ENCODE measurements at regions of chr7 and their contacts with region 1.

Region 1: DNA sequence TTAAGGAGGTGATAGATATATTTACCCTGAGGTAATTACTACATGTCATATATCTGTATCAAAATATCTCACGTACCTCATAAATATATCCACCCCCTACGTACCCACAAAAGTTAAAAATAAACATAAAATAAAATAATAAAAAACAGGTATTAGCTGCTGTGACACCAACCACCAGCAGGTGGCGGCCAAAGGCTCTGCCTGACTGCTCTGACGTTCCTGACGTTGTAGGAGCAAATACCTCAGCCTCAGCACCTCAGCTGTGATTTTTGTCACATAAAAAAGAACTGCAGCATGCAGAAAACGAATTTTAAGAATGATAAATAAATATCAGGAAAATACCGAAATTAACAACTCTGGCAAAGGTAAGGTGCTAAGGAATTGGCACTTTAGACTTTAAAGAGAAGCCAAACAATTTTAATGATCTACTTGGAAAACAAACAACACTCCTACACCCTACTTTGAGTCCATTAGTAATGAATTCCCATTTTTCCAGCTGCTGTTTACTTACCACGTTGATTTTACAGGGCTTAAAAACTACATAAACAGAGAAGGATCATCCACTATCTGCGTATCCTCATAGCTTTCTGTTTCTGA is 125.4 kb upstream of the TARP start:
- DNase-seq: peak in 1 of 2 experiments; percentile 43
- H3K4me3 ChIP-seq: no peak overlapping the region
- H3K27ac ChIP-seq: no peak overlapping the region
- H3K4me1 ChIP-seq: no peaks in the 10 kb centered on the region
- H3K27me3 ChIP-seq: peaks cover 25% of the 10 kb centered on the region
- CTCF ChIP-seq: peak; percentile 96

Region 2: GRCh38 chr7:38550836-38551235 is 152.0 kb after region 1 on chr7:
- CTCF ChIA-PET with region 1: no interaction called
- POLR2A ChIA-PET with region 1: no interaction called
- intact Hi-C with region 1: no loop called
- DNase-seq: no peak
- H3K4me3 ChIP-seq: no peak overlapping the region
- H3K27ac ChIP-seq: no peak overlapping the region
- H3K4me1 ChIP-seq: no peaks in the 10 kb centered on the region
- H3K27me3 ChIP-seq: peaks cover 27% of the 10 kb centered on the region
- CTCF ChIP-seq: no peak

Region 3: DNA sequence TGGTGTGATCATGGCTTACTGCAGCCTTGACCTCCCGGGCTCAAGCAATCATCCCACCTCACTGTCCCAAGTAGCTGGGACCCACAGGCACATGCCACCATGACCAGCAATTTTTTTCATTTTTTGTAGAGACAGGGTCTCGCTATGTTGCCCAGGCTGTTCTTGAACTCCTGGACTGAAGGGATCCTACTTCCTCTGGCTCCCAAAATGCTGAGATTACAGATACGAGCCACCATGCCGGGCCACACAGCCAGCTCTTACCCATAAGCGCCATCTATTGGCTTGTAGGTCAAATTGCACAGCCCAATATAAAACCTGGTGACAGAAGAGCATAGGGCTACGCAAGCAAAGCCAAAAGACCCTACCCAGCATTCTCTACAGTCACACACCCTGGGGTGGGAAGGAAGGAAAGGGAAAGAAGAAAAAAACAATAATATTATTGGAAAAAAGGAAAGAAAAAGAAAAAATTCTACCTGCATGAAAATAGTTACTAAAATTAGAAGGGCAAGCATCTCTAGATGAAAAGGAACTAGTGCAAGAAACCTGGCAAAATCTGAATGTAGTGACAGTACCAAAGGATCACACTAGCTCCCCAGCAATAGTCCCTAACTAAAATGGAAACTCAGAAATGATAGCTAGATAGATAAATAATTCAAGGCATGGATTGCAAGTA is 261.7 kb after region 1 on chr7:
- CTCF ChIA-PET with region 1: no interaction called
- POLR2A ChIA-PET with region 1: no interaction called
- intact Hi-C with region 1: loop called (anchors 5 kb)
- DNase-seq: no peak
- H3K4me3 ChIP-seq: no peak overlapping the region
- H3K27ac ChIP-seq: no peak overlapping the region
- H3K4me1 ChIP-seq: no peaks in the 10 kb centered on the region
- H3K27me3 ChIP-seq: peaks cover 48% of the 10 kb centered on the region
- CTCF ChIP-seq: peak; percentile 84

Measured in PC-9 (cell line).